Caco-2 (cell line): ENCODE measurements at regions of chr4 and their contacts with region 1.

Region 1: DNA sequence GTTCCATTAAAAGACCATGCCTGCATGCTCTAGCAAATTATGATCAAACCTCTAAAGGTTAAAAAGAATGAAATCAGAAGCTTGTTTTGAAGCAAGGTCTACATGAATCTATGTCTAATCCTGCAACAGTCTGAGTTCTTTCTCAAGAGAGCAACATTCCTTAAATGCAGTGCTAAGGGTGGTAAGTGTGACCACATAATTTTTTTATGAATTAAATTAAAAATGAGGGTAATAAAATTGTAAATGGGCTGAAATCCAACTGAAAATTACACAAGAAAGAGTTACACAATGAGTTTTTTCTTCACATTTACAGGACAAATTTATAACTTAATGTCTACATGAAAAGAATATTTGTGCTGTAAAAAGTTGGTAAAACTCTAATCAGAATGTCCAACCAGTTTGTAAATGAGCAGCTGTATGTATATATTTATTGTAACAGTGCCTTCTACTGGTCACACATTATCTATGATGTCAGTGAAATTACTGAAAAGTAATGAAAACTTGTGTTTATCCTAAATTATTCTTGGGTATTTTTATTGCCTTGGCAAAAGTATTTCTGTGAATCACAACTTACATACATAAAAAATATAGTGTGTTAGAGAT is 336.3 kb upstream of the PITX2 start:
- DNase-seq: no peak
- H3K4me3 ChIP-seq: no peak overlapping the region
- H3K4me3 Mint-ChIP-seq: no peak overlapping the region
- H3K27ac Mint-ChIP-seq: no peak overlapping the region
- H3K4me1 ChIP-seq: peaks cover 48% of the 10 kb centered on the region
- H3K4me1 Mint-ChIP-seq: peaks cover 7% of the 10 kb centered on the region
- H3K27me3 ChIP-seq: no peaks in the 10 kb centered on the region
- H3K27me3 Mint-ChIP-seq: no peaks in the 10 kb centered on the region
- CTCF ChIP-seq: peak; percentile 22 to 27

Region 2: GRCh38 chr4:110361921-110362320 is 597.2 kb before region 1 on chr4:
- CTCF ChIA-PET with region 1: no interaction called
- POLR2A ChIA-PET with region 1: no interaction called
- intact Hi-C with region 1: no loop called
- DNase-seq: no peak
- H3K4me3 ChIP-seq: no peak overlapping the region
- H3K4me3 Mint-ChIP-seq: no peak overlapping the region
- H3K27ac Mint-ChIP-seq: no peak overlapping the region
- H3K4me1 ChIP-seq: no peaks in the 10 kb centered on the region
- H3K4me1 Mint-ChIP-seq: no peaks in the 10 kb centered on the region
- H3K27me3 ChIP-seq: no peaks in the 10 kb centered on the region; the same call in 1 of the 2 replicates
- H3K27me3 Mint-ChIP-seq: peaks cover 16% of the 10 kb centered on the region
- CTCF ChIP-seq: no peak

Region 3: GRCh38 chr4:110516106-110516922 is 442.8 kb before region 1 on chr4:
- CTCF ChIA-PET with region 1: no interaction called
- POLR2A ChIA-PET with region 1: no interaction called
- intact Hi-C with region 1: loop called (anchors 5 kb)
- DNase-seq: peak; percentile 78
- H3K4me3 ChIP-seq: no peak overlapping the region
- H3K4me3 Mint-ChIP-seq: peak overlapping the region; percentile 64
- H3K27ac Mint-ChIP-seq: no peak overlapping the region
- H3K4me1 ChIP-seq: no peaks in the 10 kb centered on the region
- H3K4me1 Mint-ChIP-seq: no peaks in the 10 kb centered on the region
- H3K27me3 ChIP-seq: no peaks in the 10 kb centered on the region
- H3K27me3 Mint-ChIP-seq: no peaks in the 10 kb centered on the region
- CTCF ChIP-seq: peak; percentile 78 to 82

Region 4: GRCh38 chr4:110622841-110623717 is 336.1 kb before region 1 on chr4 and contains the start of gene PITX2:
- CTCF ChIA-PET with region 1: interaction called, 3 read pairs
- POLR2A ChIA-PET with region 1: no interaction called
- intact Hi-C with region 1: loop called (anchors 1 kb)
- DNase-seq: peak; percentile 99
- H3K4me3 ChIP-seq: peak within 1 kb of the TSS; percentile 58
- H3K4me3 Mint-ChIP-seq: peak within 1 kb of the TSS; percentile 92
- H3K27ac Mint-ChIP-seq: peak within 1 kb of the TSS; percentile 86
- H3K4me1 ChIP-seq: peaks cover 44% of the 10 kb centered on the region
- H3K4me1 Mint-ChIP-seq: peaks cover 47% of the 10 kb centered on the region
- H3K27me3 ChIP-seq: no peaks in the 10 kb centered on the region
- H3K27me3 Mint-ChIP-seq: no peaks in the 10 kb centered on the region
- CTCF ChIP-seq: no peak
- total RNA-seq, gene PITX2: 76.8 and 82.8 TPM in 2 replicates

Region 5: GRCh38 chr4:110636680-110637407 is 322.3 kb before region 1 on chr4:
- CTCF ChIA-PET with region 1: interaction called, 6 read pairs
- POLR2A ChIA-PET with region 1: interaction called, 4 read pairs
- intact Hi-C with region 1: loop called (anchors 1 kb)
- DNase-seq: peak; percentile 86
- H3K4me3 ChIP-seq: peak overlapping the region; percentile 73
- H3K4me3 Mint-ChIP-seq: peak overlapping the region; percentile 88
- H3K27ac Mint-ChIP-seq: peak overlapping the region; percentile 93
- H3K4me1 ChIP-seq: 0 out of 2 replicates have a peak, but pooled peaks cover 8% of the 10 kb centered on the region
- H3K4me1 Mint-ChIP-seq: peaks cover 20% of the 10 kb centered on the region
- H3K27me3 ChIP-seq: no peaks in the 10 kb centered on the region
- H3K27me3 Mint-ChIP-seq: no peaks in the 10 kb centered on the region
- CTCF ChIP-seq: no peak

Region 6: DNA sequence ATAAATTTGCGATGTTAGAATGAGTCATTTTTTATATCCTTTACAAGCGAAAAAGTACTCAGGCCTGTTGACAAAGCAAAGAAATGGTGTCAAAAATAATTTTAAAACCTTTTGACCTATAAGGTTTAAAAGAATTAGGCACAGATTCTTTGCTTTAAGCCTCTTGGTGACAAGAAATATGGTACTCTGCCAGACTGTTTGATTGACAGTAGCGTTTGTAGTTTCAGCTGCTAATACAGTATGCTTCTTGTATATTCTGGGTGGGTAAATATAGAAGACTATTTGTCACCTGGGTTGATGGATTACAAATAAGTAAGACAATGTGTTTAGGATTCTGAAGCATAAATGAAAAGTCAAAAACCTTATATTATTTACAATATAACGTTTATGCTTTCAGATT is 143.2 kb before region 1 on chr4:
- CTCF ChIA-PET with region 1: no interaction called
- POLR2A ChIA-PET with region 1: interaction called, 3 read pairs
- intact Hi-C with region 1: loop called (anchors 5 kb)
- DNase-seq: no peak
- H3K4me3 ChIP-seq: no peak overlapping the region
- H3K4me3 Mint-ChIP-seq: no peak overlapping the region
- H3K27ac Mint-ChIP-seq: no peak overlapping the region
- H3K4me1 ChIP-seq: peaks cover 55% of the 10 kb centered on the region
- H3K4me1 Mint-ChIP-seq: peaks cover 25% of the 10 kb centered on the region
- H3K27me3 ChIP-seq: no peaks in the 10 kb centered on the region
- H3K27me3 Mint-ChIP-seq: no peaks in the 10 kb centered on the region
- CTCF ChIP-seq: no peak

Region 7: DNA sequence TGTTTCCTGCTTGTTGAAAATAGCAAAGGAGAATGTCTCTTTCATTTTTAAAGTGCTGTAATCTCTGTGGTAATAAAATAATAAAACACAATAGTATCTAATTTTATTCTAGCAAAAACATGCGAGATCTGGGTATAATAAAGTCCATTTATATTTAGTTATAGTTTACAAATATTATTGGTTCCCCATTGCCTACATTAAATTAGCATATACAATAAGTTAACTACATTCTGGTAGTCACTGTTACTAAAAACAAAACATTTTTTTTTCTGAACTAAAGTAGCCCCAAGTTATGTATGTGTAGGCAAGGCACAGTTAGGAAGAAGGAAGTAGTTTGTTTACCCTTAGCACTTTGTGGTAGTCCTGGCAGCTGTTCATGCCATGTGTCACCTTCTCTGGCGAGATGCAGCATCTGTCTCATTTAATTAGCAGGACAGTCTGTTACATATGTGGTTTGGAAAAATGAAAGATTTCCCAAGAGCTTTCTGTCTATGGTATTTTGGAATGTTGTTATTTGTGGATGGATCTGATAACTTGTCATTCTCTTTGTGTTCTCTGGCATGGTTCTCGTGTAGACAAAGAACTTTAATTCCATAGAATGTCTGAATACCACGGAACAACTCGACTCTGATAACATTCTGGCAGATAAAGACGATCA is 105.0 kb before region 1 on chr4:
- CTCF ChIA-PET with region 1: no interaction called
- POLR2A ChIA-PET with region 1: no interaction called
- intact Hi-C with region 1: loop called (anchors 10 kb)
- DNase-seq: peak in 1 of 2 experiments; percentile 32
- H3K4me3 ChIP-seq: no peak overlapping the region
- H3K4me3 Mint-ChIP-seq: peak overlapping the region; percentile 28
- H3K27ac Mint-ChIP-seq: no peak overlapping the region
- H3K4me1 ChIP-seq: peaks cover 30% of the 10 kb centered on the region
- H3K4me1 Mint-ChIP-seq: peaks cover 18% of the 10 kb centered on the region
- H3K27me3 ChIP-seq: no peaks in the 10 kb centered on the region
- H3K27me3 Mint-ChIP-seq: no peaks in the 10 kb centered on the region
- CTCF ChIP-seq: no peak